Activated B cell treated with CpG ODN at 0.5 μM for 24 hours (primary cell): ENCODE measurements at regions of chr2 and their contacts with region 1.

Region 1: GRCh38 chr2:25127646-25128045 is 40.7 kb downstream of the POMC start:
- DNase-seq: no peak
- ATAC-seq: no peak
- H3K4me3 Mint-ChIP-seq: no peak overlapping the region
- H3K27ac Mint-ChIP-seq: no peak overlapping the region
- H3K4me1 Mint-ChIP-seq: peaks cover 15% of the 10 kb centered on the region
- H3K27me3 Mint-ChIP-seq: peaks cover 19% of the 10 kb centered on the region
- CTCF ChIP-seq: no peak

Region 2: GRCh38 chr2:24409700-24410556 is 717.7 kb before region 1 on chr2:
- CTCF ChIA-PET with region 1: interaction called, 37 read pairs
- POLR2A ChIA-PET with region 1: no interaction called
- intact Hi-C with region 1: loop called (anchors 1 kb)
- DNase-seq: no peak
- ATAC-seq: peak; percentile 79
- H3K4me3 Mint-ChIP-seq: no peak overlapping the region
- H3K27ac Mint-ChIP-seq: no peak overlapping the region
- H3K4me1 Mint-ChIP-seq: no peaks in the 10 kb centered on the region
- H3K27me3 Mint-ChIP-seq: peaks cover 11% of the 10 kb centered on the region
- CTCF ChIP-seq: peak; percentile 86

Region 3: GRCh38 chr2:25276569-25277465 is 149.2 kb after region 1 on chr2:
- CTCF ChIA-PET with region 1: no interaction called
- POLR2A ChIA-PET with region 1: no interaction called
- intact Hi-C with region 1: no loop called
- DNase-seq: peak; percentile 70
- ATAC-seq: peak; percentile 13
- H3K4me3 Mint-ChIP-seq: peak overlapping the region; percentile 67
- H3K27ac Mint-ChIP-seq: peak overlapping the region; percentile 76
- H3K4me1 Mint-ChIP-seq: peaks cover 88% of the 10 kb centered on the region
- H3K27me3 Mint-ChIP-seq: no peaks in the 10 kb centered on the region
- CTCF ChIP-seq: no peak